AG04450 (cell line): ENCODE measurements at regions of chr10 and their contacts with region 1.

Region 1: GRCh38 chr10:15433850-15434537 is 62.9 kb upstream of the FAM171A1 start:
- DNase-seq: peak; percentile 36
- H3K4me3 ChIP-seq: peak overlapping the region; percentile 56
- H3K27ac ChIP-seq: no peak overlapping the region
- H3K27me3 ChIP-seq: peaks cover 4% of the 10 kb centered on the region
- CTCF ChIP-seq: peak; percentile 64

Region 2: GRCh38 chr10:15719899-15720634 is 286.1 kb after region 1 on chr10 and contains the start of gene ITGA8:
- CTCF ChIA-PET with region 1: interaction called, 37 read pairs
- POLR2A ChIA-PET with region 1: no interaction called
- DNase-seq: no peak
- H3K4me3 ChIP-seq: no peak within 1 kb of the TSS
- H3K27ac ChIP-seq: no peak within 1 kb of the TSS
- H3K27me3 ChIP-seq: peaks cover 40% of the 10 kb centered on the region
- CTCF ChIP-seq: peak; percentile 31
- polyA plus RNA-seq, gene ITGA8: 0.20 and 0.25 TPM in 2 replicates

Region 3: GRCh38 chr10:15725603-15726002 is 291.6 kb after region 1 on chr10:
- CTCF ChIA-PET with region 1: interaction called, 37 read pairs
- POLR2A ChIA-PET with region 1: no interaction called
- DNase-seq: peak; percentile 38
- H3K4me3 ChIP-seq: no peak overlapping the region
- H3K27ac ChIP-seq: no peak overlapping the region
- H3K27me3 ChIP-seq: peaks cover 13% of the 10 kb centered on the region
- CTCF ChIP-seq: peak; percentile 75